ENCODE measurements at regions of chr6 and their contacts with region 1.

Region 1: DNA sequence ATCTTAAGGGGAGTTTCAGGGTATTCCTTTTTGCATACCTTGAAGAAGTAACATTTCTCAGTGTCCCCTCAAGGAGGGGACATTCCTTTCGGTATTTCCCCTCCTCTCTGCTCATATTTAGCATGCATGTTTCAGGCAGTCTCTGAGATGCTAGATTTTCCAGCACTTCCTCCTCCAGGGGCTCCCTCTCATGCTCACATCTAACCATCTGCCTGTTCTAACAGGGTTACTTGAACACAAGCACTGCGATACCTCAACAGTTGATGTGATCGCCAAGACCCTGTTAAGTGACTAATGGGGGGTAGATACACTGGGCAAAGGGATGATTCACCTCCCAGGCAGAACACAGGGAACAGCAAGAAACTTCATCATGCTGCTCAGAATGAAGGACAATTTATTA is 12.9 kb upstream of the MCM3 start:
- DNase-seq: no peak

Region 2: GRCh38 chr6:51949468-51949867 is 348.0 kb before region 1 on chr6:
- intact Hi-C with region 1: no loop called
- DNase-seq: no peak

Region 3: GRCh38 chr6:52283111-52283510 is 14.3 kb before region 1 on chr6:
- intact Hi-C with region 1: no loop called
- DNase-seq: no peak

Region 4: DNA sequence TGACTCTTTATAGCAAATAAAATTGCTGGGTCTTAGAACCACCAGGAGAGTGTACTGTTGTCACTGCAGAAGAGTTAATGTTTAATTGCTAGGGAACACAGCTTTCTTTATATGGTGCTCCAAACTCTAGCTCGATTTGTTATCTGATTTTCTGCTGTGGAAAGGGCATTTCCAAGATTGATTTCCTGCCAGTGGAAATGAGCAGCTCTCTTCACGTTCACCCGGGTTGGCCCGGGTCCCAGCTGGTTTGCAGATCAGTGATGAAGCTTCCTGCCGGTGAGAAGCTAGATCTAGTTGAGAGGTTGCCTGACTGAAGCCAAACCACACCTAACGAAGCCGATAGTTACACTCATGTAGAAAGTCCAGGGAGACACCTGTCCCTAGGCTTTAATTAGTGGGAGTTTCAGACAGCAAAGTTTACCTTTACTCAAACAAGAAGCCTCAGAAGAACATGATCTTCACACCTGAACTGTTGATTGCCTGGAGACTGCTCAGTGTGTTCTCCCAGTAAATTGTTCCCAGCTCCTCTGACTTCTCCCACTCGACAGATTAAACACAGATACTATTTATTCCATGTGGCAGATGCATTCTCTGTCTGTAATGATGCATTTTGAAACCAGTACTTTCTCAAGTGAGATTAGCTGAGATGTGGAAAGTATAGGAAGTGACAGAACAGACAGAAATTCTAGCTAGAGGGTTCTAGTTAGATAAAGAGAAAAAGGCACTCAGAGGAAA is 92.4 kb after region 1 on chr6:
- intact Hi-C with region 1: loop called in 1 of 2 experiments (anchors 5 kb)
- DNase-seq: no peak

Region 5: DNA sequence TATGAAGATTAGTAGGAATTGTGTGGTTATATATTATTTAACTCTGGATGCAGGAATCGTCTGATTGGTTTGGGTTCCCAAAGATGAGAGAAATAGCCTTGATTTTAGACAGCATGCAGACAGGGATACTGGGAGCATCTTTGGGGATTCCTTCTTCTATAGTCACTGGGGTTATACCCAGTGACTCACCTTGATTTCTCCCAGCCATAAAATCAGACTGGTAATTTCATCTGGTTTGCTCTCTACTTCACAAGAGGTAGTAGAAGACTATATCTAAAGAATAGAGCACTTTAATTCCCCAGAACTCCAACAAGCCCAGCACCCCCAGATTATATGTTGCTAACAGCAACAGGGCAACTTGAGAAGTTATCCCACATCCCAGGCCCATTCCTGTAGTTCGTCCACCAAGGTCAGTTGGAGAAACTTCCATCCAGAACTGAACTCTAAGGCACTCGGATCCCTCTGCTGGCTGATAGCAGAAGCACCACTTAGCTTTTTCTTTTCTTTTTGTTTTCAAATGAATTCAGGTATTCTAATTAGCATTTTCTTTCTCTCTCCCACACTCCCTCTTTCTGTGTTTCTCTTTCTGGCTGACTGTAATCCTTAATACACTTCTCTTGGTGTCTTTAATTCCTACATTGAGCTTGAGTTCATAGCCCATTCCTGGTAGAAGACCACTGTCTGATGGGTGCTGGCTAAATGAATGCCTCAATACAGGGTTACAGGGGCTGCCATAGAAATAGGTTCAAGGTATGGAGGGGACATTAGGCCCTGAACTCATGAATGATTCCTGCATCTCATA is 102.3 kb after region 1 on chr6:
- intact Hi-C with region 1: loop called (anchors 5 kb)
- DNase-seq: no peak

Region 6: DNA sequence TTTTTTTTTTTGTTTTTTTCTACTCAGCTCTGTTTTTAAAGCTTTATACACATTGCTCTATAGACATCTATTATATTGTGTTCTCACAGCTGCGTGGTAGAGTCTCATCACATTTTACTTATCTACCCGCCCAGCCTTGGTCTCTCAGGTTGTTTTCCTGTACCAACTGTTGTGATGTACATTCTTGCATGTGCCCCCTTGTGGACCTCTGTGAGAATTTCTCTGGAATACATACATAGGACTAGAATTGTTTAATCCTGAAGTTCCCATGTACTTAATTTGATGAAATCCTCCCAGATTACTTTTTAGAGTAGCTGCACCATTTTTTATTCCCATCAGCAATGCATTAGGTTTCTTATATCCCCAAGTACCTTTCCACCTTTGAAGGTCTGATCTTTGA is 1970.4 kb after region 1 on chr6:
- intact Hi-C with region 1: no loop called
- DNase-seq: no peak